GM12878 (cell line): ENCODE measurements at regions of chr11 and their contacts with region 1.

Region 1: DNA sequence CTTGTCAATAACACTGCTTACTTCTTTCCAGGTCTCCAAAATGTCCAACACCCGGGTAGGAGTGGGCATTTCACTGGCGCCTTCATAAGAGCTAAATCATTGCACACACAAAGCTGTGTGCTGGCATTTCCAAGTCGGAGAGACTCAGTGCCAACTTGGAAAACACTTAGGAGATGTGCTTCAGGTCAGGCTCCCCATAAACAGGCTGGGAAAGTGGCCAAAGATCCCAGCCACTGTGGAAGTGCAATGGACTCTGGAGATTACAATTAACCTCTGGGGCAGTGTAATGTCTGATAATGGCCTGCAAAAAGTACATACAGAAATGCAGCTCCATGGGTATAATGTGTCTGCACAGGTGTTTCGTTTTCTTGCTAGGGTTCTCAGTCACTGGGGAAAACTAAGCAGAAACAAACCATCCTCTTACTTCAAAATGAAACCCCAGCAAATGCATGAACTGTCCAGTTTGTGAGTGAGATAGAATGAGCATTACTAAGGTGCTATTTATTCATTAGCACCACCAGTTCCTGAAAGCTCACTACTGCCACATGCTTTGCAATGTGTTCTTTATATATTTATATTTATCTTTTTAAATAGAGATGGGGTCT is 79.0 kb downstream of the ABTB2 start:
- DNase-seq: peak; percentile 32
- ATAC-seq: peak; percentile 88
- H3K4me3 ChIP-seq: no peak overlapping the region
- H3K27ac ChIP-seq: peak overlapping the region; percentile 8; the same call in 1 of the 2 replicates
- H3K4me1 ChIP-seq: peaks cover 6% of the 10 kb centered on the region
- H3K27me3 ChIP-seq: no peaks in the 10 kb centered on the region
- CTCF ChIP-seq: no peak
- EP300 ChIP-seq: no peak
- POLR2A ChIP-seq: no peak
- RAD21 ChIP-seq: no peak

Region 2: DNA sequence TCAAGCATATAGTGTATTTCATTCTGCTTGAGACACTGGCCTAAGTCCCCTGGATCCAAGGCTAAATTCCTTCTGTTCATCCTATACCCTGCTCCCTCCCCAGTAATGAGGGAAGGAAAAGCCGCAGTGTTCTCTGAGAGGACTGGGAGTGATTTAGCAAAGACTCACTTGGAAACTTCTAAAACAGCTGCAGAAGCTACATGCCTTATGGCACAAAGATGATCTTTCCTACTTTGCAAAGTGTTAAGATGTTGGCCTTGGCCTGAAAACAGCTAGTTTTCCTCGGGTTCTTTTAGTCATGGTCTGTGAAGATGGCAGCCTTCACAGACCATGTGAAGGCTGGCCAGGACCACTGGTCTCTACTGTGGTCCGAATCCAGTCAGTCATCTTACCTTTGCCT is 13.3 kb after region 1 on chr11:
- CTCF ChIA-PET with region 1: interaction called, 11 read pairs
- POLR2A ChIA-PET with region 1: interaction called, 3 read pairs
- RAD21 ChIA-PET with region 1: no interaction called
- SMC1A ChIA-PET with region 1: interaction called, 4 read pairs
- in situ Hi-C with region 1: no loop called
- intact Hi-C with region 1: no loop called
- DNase-seq: no peak
- ATAC-seq: no peak
- H3K4me3 ChIP-seq: no peak overlapping the region
- H3K27ac ChIP-seq: no peak overlapping the region
- H3K4me1 ChIP-seq: no peaks in the 10 kb centered on the region
- H3K27me3 ChIP-seq: no peaks in the 10 kb centered on the region
- CTCF ChIP-seq: no peak
- EP300 ChIP-seq: no peak
- POLR2A ChIP-seq: no peak
- RAD21 ChIP-seq: no peak